GM13977 (cell line): ENCODE measurements at regions of chr1 and their contacts with region 1.

Region 1: DNA sequence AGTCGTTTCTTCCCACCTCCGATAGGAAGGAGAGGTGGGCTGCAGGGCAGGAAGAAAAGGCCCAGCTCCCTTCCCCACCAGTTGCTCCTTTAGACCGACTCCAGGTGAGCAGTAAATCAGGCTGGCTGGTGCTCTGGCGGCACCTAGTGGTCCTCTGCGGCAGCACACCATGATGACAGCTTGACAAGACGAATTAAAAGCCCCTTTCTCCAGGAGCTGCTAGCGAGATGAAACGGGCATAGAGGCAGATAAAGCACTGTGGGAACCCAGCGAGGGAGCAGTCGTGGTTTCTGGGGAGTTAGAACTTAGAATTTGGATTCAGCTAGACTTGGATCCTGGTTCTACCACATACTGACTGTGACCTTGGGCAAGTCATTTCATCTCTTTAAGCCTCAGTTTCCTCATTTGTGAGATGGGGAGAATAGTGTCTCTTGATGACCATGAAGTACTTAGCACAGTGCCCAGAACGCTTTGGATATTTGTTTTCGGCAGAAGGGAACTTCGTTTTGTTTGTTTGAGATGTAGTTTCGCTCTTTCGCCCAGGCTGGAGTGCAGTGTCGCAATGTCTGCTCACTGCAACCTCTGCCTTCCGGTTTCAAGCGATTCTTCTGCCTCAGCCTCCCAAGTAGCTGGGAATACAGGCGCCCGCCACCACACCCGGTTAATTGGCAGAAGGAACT is 21.8 kb upstream of the COL9A2 start:
- DNase-seq: peak; percentile 79
- CTCF ChIP-seq: peak; percentile 99

Region 2: DNA sequence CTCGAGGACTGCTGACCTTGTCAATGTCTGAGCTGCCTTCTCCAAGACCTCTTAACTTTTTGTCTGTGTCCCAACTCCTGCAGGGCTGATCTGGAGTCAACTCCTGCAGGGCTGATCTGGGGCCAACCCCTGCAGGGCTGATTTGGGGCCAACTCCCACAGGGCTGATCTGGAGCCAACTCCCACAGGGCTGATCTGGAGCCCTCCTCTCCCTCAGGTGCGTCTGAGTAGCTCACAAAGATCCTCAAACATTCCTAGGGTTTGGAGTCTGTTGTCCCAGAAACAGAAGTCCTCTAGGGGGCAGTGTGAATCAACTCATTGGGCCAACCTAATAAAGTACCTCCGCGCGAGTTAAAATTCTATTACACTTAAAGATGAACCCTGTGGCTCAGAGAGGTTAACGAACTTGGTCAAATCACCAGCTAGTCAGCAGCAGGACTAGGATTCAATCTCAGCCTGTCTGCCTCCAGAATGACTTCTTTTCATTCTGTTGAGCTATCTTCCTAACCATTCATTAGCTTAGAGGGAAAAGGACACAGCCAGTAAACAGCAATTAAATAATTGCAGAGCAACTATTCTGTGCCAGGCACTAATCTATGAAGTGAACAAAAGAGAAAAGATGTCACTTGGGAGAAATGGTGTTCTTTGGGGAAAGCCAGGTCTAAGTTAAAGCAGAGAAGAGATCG is 194.9 kb before region 1 on chr1:
- in situ Hi-C with region 1: loop called (anchors 5 kb)
- DNase-seq: peak; percentile 58
- CTCF ChIP-seq: peak; percentile 73

Region 3: DNA sequence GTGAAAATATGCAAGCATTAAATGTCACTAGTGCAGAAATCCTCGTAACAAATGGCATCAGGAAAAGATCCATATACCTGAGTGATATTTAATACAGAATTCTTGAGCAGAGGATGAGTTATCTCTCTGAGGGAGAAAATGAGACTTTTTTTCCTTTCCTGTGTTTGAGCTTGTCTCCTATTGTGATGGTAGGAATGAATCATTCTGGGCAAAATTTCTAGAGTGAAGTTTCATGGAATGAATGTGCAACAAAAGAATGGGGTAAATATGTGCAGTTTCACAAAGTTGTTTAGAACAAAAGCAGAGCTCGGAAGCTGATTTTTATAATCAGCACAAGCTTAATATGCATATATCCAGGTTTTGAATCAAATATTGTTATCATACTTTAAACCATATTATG is 645.2 kb after region 1 on chr1:
- in situ Hi-C with region 1: no loop called
- DNase-seq: no peak
- CTCF ChIP-seq: no peak